Activated CD8-positive, alpha-beta T cell treated with anti-CD3 and anti-CD28 coated beads for 36 hours (primary cell): ENCODE measurements at regions of chr12 and their contacts with region 1.

Region 1: DNA sequence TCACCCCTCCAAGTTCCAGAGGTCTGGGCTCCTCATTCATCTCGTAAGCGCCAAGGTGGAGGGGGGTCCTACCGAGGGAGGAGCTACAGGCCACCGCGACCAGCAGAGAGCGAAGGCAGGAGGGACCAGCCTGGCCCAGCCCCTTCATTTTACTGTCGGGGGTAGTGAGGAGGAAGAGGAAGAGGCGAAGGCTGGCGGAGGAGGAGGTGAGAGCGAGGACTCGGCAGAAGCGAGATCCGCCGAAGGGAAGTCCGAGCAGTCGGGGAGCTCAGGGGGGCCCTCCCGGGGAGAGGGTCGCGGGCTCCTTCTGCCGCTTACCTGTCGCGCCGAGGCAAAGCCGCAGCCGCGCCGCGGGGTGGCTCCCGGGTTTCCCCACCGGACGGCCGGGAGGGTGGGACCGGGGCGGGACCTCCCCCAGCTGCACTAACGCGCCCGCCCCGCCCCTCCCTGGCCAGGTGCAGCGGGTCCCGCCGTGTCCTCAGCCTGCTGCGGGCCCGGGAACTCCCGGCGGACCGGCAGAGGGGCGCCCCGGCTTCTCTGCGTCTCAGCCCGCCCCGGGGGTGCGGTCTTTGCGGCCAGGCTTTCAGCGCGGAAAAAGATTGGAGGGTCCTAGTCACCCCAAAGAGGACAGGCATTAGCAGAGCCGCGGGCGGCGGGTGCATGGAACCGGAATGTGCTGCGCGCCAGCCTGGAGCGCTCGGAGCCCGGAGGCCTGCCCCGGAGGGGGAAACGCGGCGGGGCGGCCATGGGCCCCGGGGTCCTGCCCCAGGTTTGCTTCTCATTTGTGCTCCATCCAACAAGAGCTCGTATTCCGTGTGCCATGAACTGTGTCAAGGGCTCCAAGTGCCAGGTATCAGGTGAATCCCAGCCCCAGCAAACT is at the start of gene GALNT6:
- DNase-seq: peak; percentile 75
- ATAC-seq: peak; percentile 47
- H3K4me3 Mint-ChIP-seq: peak within 1 kb of the TSS; percentile 89
- H3K27ac Mint-ChIP-seq: peak within 1 kb of the TSS; percentile 78
- H3K4me1 Mint-ChIP-seq: peaks cover 74% of the 10 kb centered on the region
- H3K27me3 Mint-ChIP-seq: no peaks in the 10 kb centered on the region
- CTCF ChIP-seq: no peak
- total RNA-seq, gene GALNT6: 18.0 to 22.3 TPM

Region 2: GRCh38 chr12:51150777-51151176 is 240.7 kb before region 1 on chr12:
- CTCF ChIA-PET with region 1: no interaction called
- POLR2A ChIA-PET with region 1: no interaction called
- intact Hi-C with region 1: no loop called
- DNase-seq: no peak
- ATAC-seq: no peak
- H3K4me3 Mint-ChIP-seq: no peak overlapping the region
- H3K27ac Mint-ChIP-seq: no peak overlapping the region
- H3K4me1 Mint-ChIP-seq: peaks cover 15% of the 10 kb centered on the region
- H3K27me3 Mint-ChIP-seq: no peaks in the 10 kb centered on the region
- CTCF ChIP-seq: no peak

Region 3: GRCh38 chr12:51371295-51371953 is 20.1 kb before region 1 on chr12:
- CTCF ChIA-PET with region 1: interaction called, 7 read pairs
- POLR2A ChIA-PET with region 1: interaction called, 30 read pairs
- intact Hi-C with region 1: no loop called
- DNase-seq: no peak
- ATAC-seq: no peak
- H3K4me3 Mint-ChIP-seq: no peak overlapping the region
- H3K27ac Mint-ChIP-seq: peak overlapping the region; percentile 2
- H3K4me1 Mint-ChIP-seq: peaks cover 53% of the 10 kb centered on the region
- H3K27me3 Mint-ChIP-seq: no peaks in the 10 kb centered on the region
- CTCF ChIP-seq: no peak

Region 4: GRCh38 chr12:51441583-51441982 is 50.1 kb after region 1 on chr12:
- CTCF ChIA-PET with region 1: no interaction called
- POLR2A ChIA-PET with region 1: no interaction called
- intact Hi-C with region 1: no loop called
- DNase-seq: no peak
- ATAC-seq: no peak
- H3K4me3 Mint-ChIP-seq: no peak overlapping the region
- H3K27ac Mint-ChIP-seq: no peak overlapping the region
- H3K4me1 Mint-ChIP-seq: peaks cover 12% of the 10 kb centered on the region
- H3K27me3 Mint-ChIP-seq: no peaks in the 10 kb centered on the region
- CTCF ChIP-seq: no peak

Region 5: DNA sequence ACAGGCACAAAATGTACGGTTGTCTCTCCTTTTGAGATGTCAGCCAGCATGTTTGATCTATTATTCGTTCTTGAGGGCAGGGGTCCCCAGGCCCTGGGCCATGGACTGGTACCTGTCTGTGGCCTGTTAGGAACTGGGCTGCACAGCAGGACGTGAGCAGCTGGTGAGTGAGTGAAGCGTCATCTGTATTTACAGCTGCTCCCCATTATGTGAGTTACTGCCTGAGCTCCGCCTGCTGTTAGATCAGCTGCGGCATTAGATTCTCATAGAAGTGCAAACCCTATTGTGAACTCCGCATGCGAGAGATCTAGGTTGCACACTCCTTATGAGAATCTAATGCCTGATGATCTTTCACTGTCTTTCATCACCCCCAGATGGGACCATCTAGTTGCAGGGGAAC is 158.1 kb after region 1 on chr12:
- CTCF ChIA-PET with region 1: no interaction called
- POLR2A ChIA-PET with region 1: no interaction called
- intact Hi-C with region 1: no loop called
- DNase-seq: no peak
- ATAC-seq: no peak
- H3K4me3 Mint-ChIP-seq: no peak overlapping the region
- H3K27ac Mint-ChIP-seq: no peak overlapping the region
- H3K4me1 Mint-ChIP-seq: no peaks in the 10 kb centered on the region
- H3K27me3 Mint-ChIP-seq: peaks cover 11% of the 10 kb centered on the region
- CTCF ChIP-seq: no peak